ENCODE measurements at regions of chr21 and their contacts with region 1.

Region 1: DNA sequence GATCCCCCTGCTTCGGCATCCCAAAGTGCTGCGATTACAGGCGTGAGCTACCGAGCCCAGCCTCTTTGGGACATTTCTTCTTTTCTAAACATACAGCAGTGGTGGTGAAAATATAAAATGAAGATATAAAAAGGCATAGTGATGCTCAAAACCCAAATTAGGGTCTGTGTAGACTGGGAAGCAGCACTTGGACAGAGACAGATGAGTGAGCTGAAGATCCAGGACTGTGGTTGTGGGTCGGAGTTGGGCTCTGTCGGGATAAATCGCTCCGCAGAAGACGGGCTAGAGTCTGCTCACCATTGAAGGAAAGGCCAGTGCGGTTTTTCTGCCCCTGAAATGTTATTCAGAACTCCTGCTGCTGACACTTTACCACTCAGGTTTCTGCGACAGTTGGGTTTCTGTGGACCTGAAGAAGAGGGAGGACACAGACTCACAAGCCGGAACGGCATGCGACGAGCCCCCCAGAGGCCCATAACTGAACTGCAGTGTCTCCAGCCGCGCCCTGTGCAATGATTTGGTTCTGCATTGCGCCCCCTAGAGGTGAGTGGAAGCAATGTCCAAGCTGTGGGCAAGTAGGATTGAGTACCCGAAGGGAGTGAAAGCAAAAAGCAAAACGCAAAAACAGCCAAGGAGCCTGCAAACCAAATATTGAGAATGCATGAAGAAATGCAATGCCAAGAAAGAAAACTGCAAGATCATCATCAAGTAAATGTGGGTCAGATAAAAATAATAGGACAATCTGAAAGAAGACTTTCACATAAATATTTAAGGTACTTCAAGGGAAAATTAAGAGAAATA is 66.6 kb downstream of the GABPA start:
- DNase-seq: peak; percentile 86
- H3K4me3 ChIP-seq: no peak overlapping the region
- H3K27ac ChIP-seq: no peak overlapping the region
- H3K4me1 ChIP-seq: no peaks in the 10 kb centered on the region
- CTCF ChIP-seq: peak; percentile 99

Region 2: DNA sequence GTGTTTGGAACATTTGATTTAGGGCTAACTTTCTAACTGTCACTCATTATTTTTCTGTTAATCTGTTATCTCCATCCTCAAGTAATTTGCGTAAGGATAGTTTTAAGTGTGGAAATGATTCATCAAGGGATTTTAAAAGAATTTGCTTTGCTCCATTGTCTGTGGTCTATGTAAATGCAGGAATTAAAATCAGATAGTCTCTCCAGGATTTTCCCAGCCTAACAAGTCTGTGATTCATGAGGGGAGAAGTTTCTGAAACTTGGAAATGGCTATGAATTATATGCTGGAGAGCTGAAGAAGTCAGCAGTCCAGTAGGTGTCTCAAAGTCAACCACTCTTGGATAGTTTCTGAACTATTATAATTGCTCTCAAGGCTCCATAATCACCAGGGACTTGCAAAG is 458.6 kb before region 1 on chr21:
- CTCF ChIA-PET with region 1: no interaction called
- POLR2A ChIA-PET with region 1: no interaction called
- intact Hi-C with region 1: no loop called
- DNase-seq: no peak
- H3K4me3 ChIP-seq: no peak overlapping the region
- H3K27ac ChIP-seq: no peak overlapping the region
- H3K4me1 ChIP-seq: no peaks in the 10 kb centered on the region
- CTCF ChIP-seq: no peak

Region 3: GRCh38 chr21:25708467-25709065 is 92.8 kb before region 1 on chr21:
- CTCF ChIA-PET with region 1: no interaction called
- POLR2A ChIA-PET with region 1: no interaction called
- intact Hi-C with region 1: loop called (anchors 5 kb)
- DNase-seq: peak; percentile 60
- H3K4me3 ChIP-seq: no peak overlapping the region
- H3K27ac ChIP-seq: no peak overlapping the region
- H3K4me1 ChIP-seq: no peaks in the 10 kb centered on the region
- CTCF ChIP-seq: peak; percentile 95

Region 4: GRCh38 chr21:25767921-25768320 is 33.5 kb before region 1 on chr21:
- CTCF ChIA-PET with region 1: no interaction called
- POLR2A ChIA-PET with region 1: no interaction called
- intact Hi-C with region 1: no loop called
- DNase-seq: no peak
- H3K4me3 ChIP-seq: no peak overlapping the region
- H3K27ac ChIP-seq: no peak overlapping the region
- H3K4me1 ChIP-seq: peaks cover 3% of the 10 kb centered on the region
- CTCF ChIP-seq: no peak

Region 5: DNA sequence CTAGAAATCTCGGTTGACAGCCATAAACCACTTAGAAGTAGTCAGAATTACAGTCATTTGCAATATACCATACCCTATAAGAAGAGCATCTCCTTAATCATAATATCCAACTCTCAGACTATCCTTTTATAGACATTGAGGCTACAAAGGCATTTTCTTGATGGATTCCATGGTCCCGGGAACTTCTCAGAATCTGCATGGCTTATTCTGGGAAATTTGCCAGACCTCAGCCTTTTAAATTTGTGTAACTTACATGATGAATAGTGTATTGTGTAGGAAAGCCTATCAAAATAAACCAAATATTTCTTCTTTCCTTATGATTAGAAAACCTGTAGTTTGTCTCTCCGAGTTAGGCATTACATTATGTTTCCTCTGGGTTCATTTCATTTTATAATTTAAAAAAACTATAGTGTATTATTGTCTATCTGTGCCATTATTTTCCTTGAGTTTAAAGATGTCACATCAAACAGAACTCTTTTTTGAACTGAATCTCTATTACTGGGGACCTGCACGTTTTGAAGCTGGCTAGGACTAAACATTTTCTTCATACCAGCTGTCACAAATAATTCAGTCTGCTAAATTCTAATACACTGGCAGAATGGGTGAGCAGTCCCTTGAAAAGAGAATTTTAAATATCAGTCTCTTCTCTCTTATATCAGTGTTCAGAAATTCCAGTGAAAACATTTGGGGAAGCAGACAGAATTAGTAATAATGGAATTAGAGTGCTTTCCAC is 36.3 kb after region 1 on chr21:
- CTCF ChIA-PET with region 1: no interaction called
- POLR2A ChIA-PET with region 1: no interaction called
- intact Hi-C with region 1: no loop called
- DNase-seq: no peak
- H3K4me3 ChIP-seq: no peak overlapping the region
- H3K27ac ChIP-seq: no peak overlapping the region
- H3K4me1 ChIP-seq: no peaks in the 10 kb centered on the region
- CTCF ChIP-seq: no peak

Measured in OCI-LY7 (cell line).